Naive thymus-derived CD4-positive, alpha-beta T cell (primary cell): ENCODE measurements at regions of chr5 and their contacts with region 1.

Region 1: DNA sequence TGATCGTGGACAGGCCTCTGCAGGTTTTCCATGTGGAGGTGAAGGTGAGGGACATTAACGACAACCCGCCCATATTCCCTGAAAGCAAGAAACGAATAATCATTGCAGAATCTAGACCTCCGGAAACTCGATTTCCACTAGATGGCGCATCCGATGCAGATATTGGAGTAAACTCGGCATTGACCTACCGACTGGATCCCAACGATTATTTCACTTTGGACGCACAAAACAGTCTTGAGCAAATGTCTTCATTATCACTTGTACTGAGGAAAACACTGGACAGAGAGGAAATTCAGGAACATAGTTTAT is 621 bp downstream of the PCDHA13 start:
- DNase-seq: no peak
- ATAC-seq: no peak
- H3K4me3 ChIP-seq: no peak overlapping the region
- H3K4me3 Mint-ChIP-seq: no peak overlapping the region
- H3K27ac ChIP-seq: no peak overlapping the region
- H3K27ac Mint-ChIP-seq: peak overlapping the region in 1 of 9 donors; percentile 46
- H3K4me1 ChIP-seq: no peaks in the 10 kb centered on the region
- H3K4me1 Mint-ChIP-seq: no peaks in the 10 kb centered on the region
- H3K27me3 ChIP-seq: no peaks in the 10 kb centered on the region
- H3K27me3 Mint-ChIP-seq: peaks cover 0 to 56% (median 53%) of the 10 kb centered on the region in 5 donors

Region 2: DNA sequence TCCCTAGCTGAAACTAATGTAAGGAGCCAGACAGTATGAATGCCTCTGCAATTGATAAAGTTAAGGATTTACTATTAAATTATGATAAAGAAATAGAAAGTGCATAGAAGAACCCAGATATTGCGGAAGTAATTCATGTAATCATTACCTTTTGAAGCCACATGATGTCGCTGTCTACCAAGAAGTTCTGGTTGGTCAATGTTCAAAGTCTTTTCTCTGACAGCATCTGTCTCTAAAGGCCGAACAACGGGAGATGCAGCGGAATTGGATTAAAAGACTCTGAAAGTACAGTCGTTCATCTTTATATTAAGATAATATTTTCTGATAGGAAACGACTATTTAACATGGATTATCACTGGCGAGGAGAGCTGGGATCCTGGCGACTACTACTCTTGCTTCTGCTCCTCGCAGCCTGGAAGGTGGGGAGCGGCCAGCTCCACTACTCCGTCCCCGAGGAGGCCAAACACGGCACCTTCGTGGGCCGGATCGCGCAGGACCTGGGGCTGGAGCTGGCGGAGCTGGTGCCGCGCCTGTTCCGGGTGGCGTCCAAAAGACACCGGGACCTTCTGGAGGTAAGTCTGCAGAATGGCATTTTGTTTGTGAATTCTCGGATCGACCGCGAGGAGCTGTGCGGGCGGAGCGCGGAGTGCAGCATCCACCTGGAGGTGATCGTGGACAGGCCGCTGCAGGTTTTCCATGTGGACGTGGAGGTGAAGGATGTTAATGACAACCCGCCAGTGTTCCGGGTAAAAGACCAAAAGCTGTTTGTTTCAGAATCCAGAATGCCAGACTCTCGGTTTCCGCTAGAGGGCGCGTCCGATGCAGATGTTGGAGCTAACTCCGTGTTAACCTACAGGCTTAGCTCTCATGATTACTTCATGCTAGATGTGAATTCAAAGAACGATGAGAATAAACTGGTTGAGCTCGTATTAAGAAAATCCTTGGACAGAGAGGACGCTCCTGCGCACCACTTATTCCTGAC is 41.3 kb before region 1 on chr5 and contains the start of gene PCDHA8:
- CTCF ChIA-PET with region 1: interaction called, 3 read pairs
- POLR2A ChIA-PET with region 1: no interaction called
- intact Hi-C with region 1: loop called in 1 of 2 experiments (anchors 5 kb)
- DNase-seq: no peak
- ATAC-seq: no peak
- H3K4me3 ChIP-seq: no peak within 1 kb of the TSS
- H3K4me3 Mint-ChIP-seq: peak within 1 kb of the TSS in 2 of 10 donors; percentile 3 to 18
- H3K27ac ChIP-seq: no peak within 1 kb of the TSS
- H3K27ac Mint-ChIP-seq: peak within 1 kb of the TSS in 2 of 9 donors; percentile 39 to 51
- H3K4me1 ChIP-seq: no peaks in the 10 kb centered on the region
- H3K4me1 Mint-ChIP-seq: no peaks in the 10 kb centered on the region
- H3K27me3 ChIP-seq: no peaks in the 10 kb centered on the region
- H3K27me3 Mint-ChIP-seq: peaks cover 0 to 45% (median 37%) of the 10 kb centered on the region in 5 donors
- total RNA-seq, gene PCDHA8: not detected

Region 3: DNA sequence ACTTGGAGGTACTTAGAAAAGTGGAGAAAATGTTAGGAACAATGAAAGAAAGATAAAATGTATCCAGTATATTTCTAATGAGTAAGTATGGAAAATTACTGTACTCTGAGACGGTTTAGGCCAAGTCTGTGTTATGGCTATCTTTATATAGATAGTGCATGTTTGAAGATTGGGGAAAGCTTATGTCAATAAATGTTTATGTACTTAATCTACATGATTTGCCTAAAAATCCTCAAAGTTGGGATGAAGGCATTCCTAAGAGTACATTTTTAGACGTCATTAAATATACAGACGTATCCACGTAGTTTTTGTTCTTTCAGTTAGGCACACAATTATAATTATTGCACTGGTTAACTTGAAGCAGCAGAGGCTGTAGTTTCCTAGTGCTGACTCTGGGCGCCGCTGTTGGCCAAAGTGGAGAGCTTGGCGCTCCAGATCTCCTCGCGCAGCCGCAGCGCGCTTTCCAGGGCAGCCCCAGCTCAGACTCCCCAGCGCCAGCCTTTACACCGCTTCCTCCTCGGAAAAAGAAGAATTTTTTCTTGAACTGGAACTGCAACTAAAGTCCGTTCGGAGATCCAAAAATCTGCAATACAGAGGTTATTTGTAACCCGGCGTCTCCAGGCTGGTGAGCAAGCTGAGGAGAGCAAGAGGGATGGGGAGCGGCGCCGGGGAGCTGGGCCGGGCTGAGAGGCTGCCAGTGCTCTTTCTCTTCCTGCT is 504.8 kb after region 1 on chr5 and contains the start of gene PCDHGB4:
- CTCF ChIA-PET with region 1: no interaction called
- POLR2A ChIA-PET with region 1: no interaction called
- intact Hi-C with region 1: no loop called
- DNase-seq: peak in 3 of 9 donors; percentile 8 to 24 (median 8)
- ATAC-seq: peak; percentile 74
- H3K4me3 ChIP-seq: no peak within 1 kb of the TSS
- H3K4me3 Mint-ChIP-seq: peak within 1 kb of the TSS in 9 of 10 donors; percentile 19 to 68 (median 50)
- H3K27ac ChIP-seq: no peak within 1 kb of the TSS
- H3K27ac Mint-ChIP-seq: no peak within 1 kb of the TSS
- H3K4me1 ChIP-seq: no peaks in the 10 kb centered on the region
- H3K4me1 Mint-ChIP-seq: peaks cover 0 to 4% (median 0%) of the 10 kb centered on the region in 7 donors
- H3K27me3 ChIP-seq: peaks cover 4 to 20% of the 10 kb centered on the region in 2 donors
- H3K27me3 Mint-ChIP-seq: peaks cover 36 to 85% (median 81%) of the 10 kb centered on the region in 5 donors
- total RNA-seq, gene PCDHGB4: 0.08 to 0.27 (median 0.24) TPM in 4 of 5 experiments, not detected in the other